ENCODE measurements at regions of chr10 and their contacts with region 1.

Region 1: DNA sequence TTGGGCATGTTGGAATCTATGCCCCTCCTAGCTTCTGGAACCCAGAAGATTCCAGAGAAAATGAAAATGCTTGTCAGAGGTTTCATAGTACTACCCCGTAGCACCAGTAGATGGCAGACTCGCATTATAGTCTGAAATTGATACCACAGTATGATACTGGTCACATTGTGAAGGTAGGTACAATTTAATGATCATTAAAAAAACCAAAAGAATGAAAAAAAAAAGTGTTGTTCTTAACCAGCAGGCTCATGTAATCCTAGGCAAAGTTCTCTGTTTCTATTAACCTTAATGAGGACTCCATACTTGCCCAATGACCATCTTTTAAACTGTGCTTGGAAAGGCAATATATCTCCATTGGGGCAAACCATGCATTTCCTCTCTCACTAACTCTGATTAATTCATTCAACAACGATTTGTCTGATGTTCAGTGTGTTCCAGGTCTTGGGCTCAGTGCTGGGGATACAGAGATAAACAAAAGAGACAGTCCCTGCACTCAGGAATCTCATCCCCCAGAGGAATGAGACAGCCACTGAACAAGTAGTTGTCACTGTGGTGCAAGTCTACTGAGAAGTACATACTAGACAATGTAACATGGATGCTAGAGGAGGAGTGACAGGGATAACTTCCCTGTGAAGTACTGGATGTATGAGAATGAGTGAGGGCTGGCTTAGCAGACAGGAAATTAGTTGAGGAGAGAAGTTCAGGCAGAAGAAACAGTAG is 223.5 kb upstream of the PHYHIPL start:
- DNase-seq: peak; percentile 19
- ATAC-seq: peak; percentile 90
- H3K4me3 ChIP-seq: no peak overlapping the region
- H3K27ac ChIP-seq: no peak overlapping the region
- H3K4me1 ChIP-seq: no peaks in the 10 kb centered on the region
- H3K27me3 ChIP-seq: no peaks in the 10 kb centered on the region
- CTCF ChIP-seq: peak; percentile 76 to 91 (median 80); a peak in 5 of 6 replicates
- EP300 ChIP-seq: no peak
- POLR2A ChIP-seq: no peak
- RAD21 ChIP-seq: peak; percentile 98

Region 2: GRCh38 chr10:58967551-58968388 is 14.9 kb after region 1 on chr10:
- CTCF ChIA-PET with region 1: interaction called, 28 read pairs
- POLR2A ChIA-PET with region 1: no interaction called
- RAD21 ChIA-PET with region 1: interaction called, 11 read pairs
- SMC1A ChIA-PET with region 1: interaction called, 15 read pairs
- in situ Hi-C with region 1: no loop called
- intact Hi-C with region 1: no loop called
- DNase-seq: no peak
- ATAC-seq: peak; percentile 88
- H3K4me3 ChIP-seq: no peak overlapping the region
- H3K27ac ChIP-seq: no peak overlapping the region
- H3K4me1 ChIP-seq: no peaks in the 10 kb centered on the region
- H3K27me3 ChIP-seq: no peaks in the 10 kb centered on the region
- CTCF ChIP-seq: no peak
- EP300 ChIP-seq: no peak
- POLR2A ChIP-seq: no peak
- RAD21 ChIP-seq: no peak

Region 3: DNA sequence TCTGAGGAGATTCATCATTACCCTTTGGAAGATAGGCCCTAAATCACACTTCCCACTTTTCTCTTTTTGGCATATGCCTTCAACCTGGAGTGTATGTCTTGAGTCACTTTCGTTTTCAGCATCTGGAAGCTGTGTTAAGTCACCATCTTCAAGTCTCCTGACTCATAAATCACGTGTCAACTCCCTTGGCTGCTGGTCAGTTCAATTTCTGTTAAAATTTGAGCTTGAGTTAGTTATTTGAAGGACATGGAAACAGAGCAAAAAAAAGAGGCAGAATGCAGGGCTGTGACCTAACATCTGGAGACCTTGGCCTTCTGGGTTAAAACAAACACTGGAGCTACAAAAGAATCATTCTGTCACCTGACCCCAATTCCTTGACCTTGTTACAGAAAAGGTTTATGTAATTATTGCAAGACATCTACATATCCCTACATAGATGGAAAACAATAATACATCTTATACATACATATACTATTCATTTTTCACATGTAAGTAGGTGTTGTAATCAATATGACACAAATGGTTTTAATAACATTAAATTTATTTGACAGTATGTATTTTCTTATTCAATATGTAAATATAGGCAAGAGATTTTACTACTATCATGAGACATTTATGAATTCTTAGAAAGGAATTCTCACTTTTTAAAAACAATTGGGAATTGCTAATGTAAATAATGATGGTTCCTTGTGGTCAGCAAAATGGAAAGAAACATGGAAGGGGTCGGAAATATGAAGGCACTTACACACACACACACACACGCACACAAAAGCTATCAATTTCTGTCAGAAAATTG is 53.8 kb after region 1 on chr10:
- CTCF ChIA-PET with region 1: interaction called, 6 read pairs
- POLR2A ChIA-PET with region 1: no interaction called
- RAD21 ChIA-PET with region 1: interaction called, 6 read pairs
- SMC1A ChIA-PET with region 1: interaction called, 13 read pairs
- in situ Hi-C with region 1: no loop called
- intact Hi-C with region 1: no loop called
- DNase-seq: no peak
- ATAC-seq: peak; percentile 49
- H3K4me3 ChIP-seq: no peak overlapping the region
- H3K27ac ChIP-seq: no peak overlapping the region
- H3K4me1 ChIP-seq: peaks cover 4% of the 10 kb centered on the region
- H3K27me3 ChIP-seq: no peaks in the 10 kb centered on the region
- CTCF ChIP-seq: no peak
- EP300 ChIP-seq: 0 out of 4 replicates have a peak, but pooled peaks of 1 of the 2 experiments have one; percentile 26
- POLR2A ChIP-seq: no peak
- RAD21 ChIP-seq: no peak

Region 4: GRCh38 chr10:59079386-59080226 is 126.7 kb after region 1 on chr10:
- CTCF ChIA-PET with region 1: interaction called, 5 read pairs
- POLR2A ChIA-PET with region 1: no interaction called
- RAD21 ChIA-PET with region 1: interaction called, 10 read pairs
- SMC1A ChIA-PET with region 1: interaction called, 12 read pairs
- in situ Hi-C with region 1: no loop called
- intact Hi-C with region 1: no loop called
- DNase-seq: no peak
- ATAC-seq: no peak
- H3K4me3 ChIP-seq: no peak overlapping the region
- H3K27ac ChIP-seq: no peak overlapping the region
- H3K4me1 ChIP-seq: 0 out of 2 replicates have a peak, but pooled peaks cover 3% of the 10 kb centered on the region
- H3K27me3 ChIP-seq: no peaks in the 10 kb centered on the region
- CTCF ChIP-seq: no peak
- EP300 ChIP-seq: no peak
- POLR2A ChIP-seq: no peak
- RAD21 ChIP-seq: no peak

Region 5: DNA sequence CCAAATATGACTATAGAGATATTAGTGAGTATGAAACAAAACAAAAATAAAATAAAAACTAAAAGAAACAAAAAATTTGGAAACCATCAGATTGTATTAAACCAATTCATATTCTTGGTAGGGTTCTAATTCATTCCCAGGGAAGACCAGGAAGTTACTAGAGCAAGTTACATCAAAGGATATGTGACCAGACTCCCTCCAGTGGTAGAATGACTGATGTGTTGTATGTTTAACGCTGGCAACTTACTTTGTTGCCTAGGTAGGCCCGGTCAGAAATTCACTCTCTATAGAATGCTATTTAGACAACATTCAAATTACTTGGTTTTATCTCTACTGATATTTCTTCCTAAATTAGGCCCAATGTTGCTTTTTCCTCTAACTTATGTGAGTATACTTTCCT is 228.8 kb after region 1 on chr10:
- CTCF ChIA-PET with region 1: interaction called, 66 read pairs
- POLR2A ChIA-PET with region 1: interaction called, 3 read pairs
- RAD21 ChIA-PET with region 1: interaction called, 37 read pairs
- SMC1A ChIA-PET with region 1: interaction called, 54 read pairs
- in situ Hi-C with region 1: loop called (anchors 5 kb)
- intact Hi-C with region 1: loop called (anchors 1 kb)
- DNase-seq: peak; percentile 17
- ATAC-seq: peak; percentile 90
- H3K4me3 ChIP-seq: no peak overlapping the region
- H3K27ac ChIP-seq: no peak overlapping the region
- H3K4me1 ChIP-seq: no peaks in the 10 kb centered on the region
- H3K27me3 ChIP-seq: peaks cover 0 to 4% of the 10 kb centered on the region in 2 experiments; a peak in 1 of 4 replicates
- CTCF ChIP-seq: peak; percentile 37 to 67 (median 55); a peak in 5 of 6 replicates
- EP300 ChIP-seq: no peak
- POLR2A ChIP-seq: no peak
- RAD21 ChIP-seq: peak; percentile 80

Region 6: DNA sequence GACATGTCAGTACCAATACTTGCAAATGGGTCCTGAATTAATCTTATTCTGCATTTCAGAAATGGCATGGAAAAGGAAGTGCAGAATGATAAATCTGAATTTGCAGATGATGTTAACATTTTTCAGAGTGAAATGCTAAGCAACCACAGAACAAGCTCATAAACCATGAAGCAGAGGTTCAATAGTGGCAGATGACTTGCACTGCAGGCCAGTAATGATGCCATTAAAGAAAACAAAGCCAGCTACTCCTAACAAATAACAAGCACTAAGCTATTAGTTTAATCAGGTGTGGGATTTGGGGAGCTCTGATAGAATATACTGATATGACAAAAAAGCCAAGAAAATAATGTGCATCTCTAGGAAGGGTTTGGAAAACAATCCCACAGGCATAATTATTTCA is 324.0 kb after region 1 on chr10:
- CTCF ChIA-PET with region 1: interaction called, 10 read pairs
- POLR2A ChIA-PET with region 1: no interaction called
- RAD21 ChIA-PET with region 1: interaction called, 9 read pairs
- SMC1A ChIA-PET with region 1: no interaction called
- in situ Hi-C with region 1: no loop called
- intact Hi-C with region 1: no loop called
- DNase-seq: no peak
- ATAC-seq: no peak
- H3K4me3 ChIP-seq: no peak overlapping the region
- H3K27ac ChIP-seq: no peak overlapping the region
- H3K4me1 ChIP-seq: no peaks in the 10 kb centered on the region
- H3K27me3 ChIP-seq: no peaks in the 10 kb centered on the region
- CTCF ChIP-seq: no peak
- EP300 ChIP-seq: no peak
- POLR2A ChIP-seq: no peak
- RAD21 ChIP-seq: no peak

Region 7: DNA sequence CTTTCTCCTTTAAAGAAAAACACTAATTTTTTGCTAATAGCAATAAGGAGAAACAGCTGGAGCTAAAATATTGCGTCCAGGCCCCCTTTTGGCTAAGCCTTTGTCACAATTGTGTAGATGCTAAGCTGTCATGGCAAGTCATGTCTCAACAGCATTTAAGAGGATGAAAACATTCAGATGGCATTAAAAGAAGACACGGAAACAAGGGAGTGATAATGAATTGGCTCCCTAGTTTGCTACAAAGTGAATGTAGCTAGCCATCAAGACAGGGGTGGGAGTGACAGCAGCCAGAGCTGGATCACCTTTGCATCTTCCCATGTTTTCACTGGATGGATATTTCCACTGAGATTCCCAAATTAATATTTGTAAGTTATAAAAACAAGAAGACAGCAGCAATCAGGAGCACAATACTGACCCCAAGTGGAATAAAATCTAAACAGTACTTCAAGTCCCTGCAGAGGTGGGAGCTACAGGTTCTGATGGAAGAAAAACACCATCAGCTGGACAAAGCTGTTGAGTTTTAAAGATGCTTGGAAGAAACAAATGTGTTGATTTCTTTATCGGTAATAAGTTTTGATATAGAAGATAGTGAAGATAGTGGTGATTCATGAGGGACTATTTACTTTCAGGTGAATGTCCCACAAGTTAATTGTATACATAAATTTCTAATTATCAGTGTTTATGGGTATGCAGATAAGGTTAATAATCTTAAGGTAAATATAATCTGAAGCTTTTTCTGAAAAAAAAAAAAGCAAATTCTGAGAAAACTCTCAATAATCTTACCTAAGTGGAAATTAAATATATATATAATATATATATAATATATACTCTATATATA is 627.3 kb after region 1 on chr10:
- CTCF ChIA-PET with region 1: interaction called, 11 read pairs
- POLR2A ChIA-PET with region 1: no interaction called
- RAD21 ChIA-PET with region 1: interaction called, 7 read pairs
- SMC1A ChIA-PET with region 1: interaction called, 10 read pairs
- in situ Hi-C with region 1: no loop called
- intact Hi-C with region 1: loop called (anchors 2 kb)
- DNase-seq: no peak
- ATAC-seq: no peak
- H3K4me3 ChIP-seq: no peak overlapping the region
- H3K27ac ChIP-seq: no peak overlapping the region
- H3K4me1 ChIP-seq: no peaks in the 10 kb centered on the region
- H3K27me3 ChIP-seq: no peaks in the 10 kb centered on the region
- CTCF ChIP-seq: peak; percentile 18 to 37 (median 20); a peak in 3 of 6 replicates
- EP300 ChIP-seq: no peak
- POLR2A ChIP-seq: no peak
- RAD21 ChIP-seq: peak; percentile 63

Measured in GM12878 (cell line).